A673 (cell line): ENCODE measurements at regions of chr9 and their contacts with region 1.

Region 1: DNA sequence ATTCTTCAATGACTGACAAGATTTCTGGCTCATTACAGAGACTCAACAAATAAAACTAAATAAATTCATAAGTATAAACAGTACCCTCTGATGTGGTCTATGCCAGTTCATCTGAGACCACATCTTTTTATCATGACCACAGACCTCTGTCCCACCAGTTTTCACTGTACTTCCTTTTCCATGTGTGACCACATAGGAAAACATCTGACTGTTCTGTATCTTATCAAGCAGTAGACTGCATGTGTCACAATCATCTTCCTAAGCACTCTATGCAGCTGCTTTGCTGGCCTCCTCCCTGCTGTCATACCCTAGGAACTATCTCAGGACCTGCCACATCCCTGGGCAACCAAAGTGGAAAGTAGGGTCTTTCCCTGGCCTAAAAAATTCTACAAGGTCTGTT is 205.0 kb upstream of the ZNF462 start:
- DNase-seq: no peak
- H3K4me3 ChIP-seq: no peak overlapping the region
- H3K27ac ChIP-seq: no peak overlapping the region
- H3K4me1 ChIP-seq: no peaks in the 10 kb centered on the region
- H3K27me3 ChIP-seq: no peaks in the 10 kb centered on the region
- CTCF ChIP-seq: no peak

Region 2: DNA sequence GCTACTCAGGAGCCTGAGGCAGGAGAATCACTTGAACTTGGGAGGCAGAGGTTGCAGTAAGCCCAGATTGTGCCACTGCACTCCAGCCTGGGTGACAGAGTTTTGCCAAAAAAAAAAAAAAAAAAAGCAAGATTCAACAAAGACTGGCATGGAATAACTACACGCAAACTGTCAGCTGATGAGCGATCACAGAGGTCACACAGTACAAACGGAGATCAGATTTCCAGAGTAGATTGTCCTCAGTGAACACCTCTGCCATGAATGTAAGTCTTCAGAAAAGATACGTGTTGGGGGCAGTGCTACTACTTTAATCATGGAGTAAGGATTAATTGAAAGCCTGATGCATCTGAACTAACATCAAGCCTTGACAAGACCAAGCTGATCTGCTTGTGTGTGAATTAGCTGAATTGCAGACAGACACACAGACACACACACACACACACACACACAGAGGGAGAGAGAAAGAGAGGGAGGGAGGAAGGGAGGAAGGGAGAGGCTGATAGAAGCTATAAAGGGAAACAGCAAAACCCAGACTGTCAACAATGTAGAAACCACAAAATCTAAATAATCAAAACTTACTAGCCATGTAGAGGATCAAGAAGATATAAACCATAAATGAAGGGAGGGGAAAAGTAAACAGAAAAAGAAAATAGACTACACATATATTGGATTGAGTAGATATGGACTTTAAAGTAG is 17.9 kb before region 1 on chr9:
- CTCF ChIA-PET with region 1: no interaction called
- POLR2A ChIA-PET with region 1: interaction called, 3 read pairs
- intact Hi-C with region 1: loop called (anchors 1 kb)
- DNase-seq: no peak
- H3K4me3 ChIP-seq: no peak overlapping the region
- H3K27ac ChIP-seq: no peak overlapping the region
- H3K4me1 ChIP-seq: no peaks in the 10 kb centered on the region
- H3K27me3 ChIP-seq: no peaks in the 10 kb centered on the region
- CTCF ChIP-seq: no peak